Esophagus muscularis mucosa (tissue), 4 donors: ENCODE measurements at regions of chr5 and their contacts with region 1.

Region 1: DNA sequence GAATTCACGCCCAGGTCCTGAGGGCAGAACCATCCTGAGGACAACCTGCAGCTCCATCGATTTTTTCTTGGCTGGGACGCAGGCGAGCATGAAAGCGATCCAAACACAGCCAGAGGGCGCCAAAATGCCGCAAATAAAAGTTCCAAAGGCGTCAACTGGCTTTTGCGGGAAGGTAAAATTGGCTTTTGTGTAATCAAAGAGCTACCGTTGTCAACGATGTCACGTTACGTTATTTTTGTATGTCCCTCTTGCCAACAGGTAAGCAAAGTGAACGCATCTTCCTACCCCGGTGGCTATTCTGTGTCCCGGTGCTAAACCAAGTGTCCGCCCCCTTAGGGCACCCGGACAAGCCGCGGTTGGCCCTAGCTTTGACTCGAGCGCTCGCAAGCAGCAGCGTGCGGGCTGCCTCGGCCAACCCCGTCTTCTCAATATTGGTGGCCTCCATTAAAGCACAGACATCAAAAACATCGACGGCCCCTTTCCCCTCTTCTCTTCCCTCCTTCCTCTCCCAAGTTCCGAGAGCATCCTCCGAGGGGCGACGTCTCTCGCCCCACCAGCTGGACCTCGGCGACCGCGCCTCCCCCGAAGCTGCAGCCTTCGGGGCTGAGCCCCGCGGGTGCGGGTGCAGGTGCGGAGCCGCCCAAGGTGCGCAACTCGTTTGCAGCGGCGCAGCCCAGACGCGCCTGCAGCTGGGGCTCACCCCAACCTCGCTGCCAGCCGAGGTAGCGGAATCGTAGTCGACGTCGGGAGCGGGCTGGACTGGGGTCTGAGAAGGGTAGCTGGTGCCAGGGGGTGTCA is 1.1 kb upstream of the BASP1 start:
- DNase-seq: no peak
- H3K4me3 ChIP-seq: peak overlapping the region; percentile 48 to 61 (median 50)
- H3K27ac ChIP-seq: no peak overlapping the region
- H3K4me1 ChIP-seq: peaks cover 6 to 31% (median 30%) of the 10 kb centered on the region in 4 donors
- H3K27me3 ChIP-seq: peaks cover 0 to 71% (median 29%) of the 10 kb centered on the region in 4 donors
- CTCF ChIP-seq: peak; percentile 51 to 67 (median 65)
- EP300 ChIP-seq: no peak
- POLR2A ChIP-seq: no peak

Region 2: GRCh38 chr5:16936150-16936920 is 280.0 kb before region 1 on chr5 and contains the start of gene MYO10:
- intact Hi-C with region 1: no loop called
- DNase-seq: no peak
- H3K4me3 ChIP-seq: peak within 1 kb of the TSS; percentile 62 to 73 (median 68)
- H3K27ac ChIP-seq: peak within 1 kb of the TSS; percentile 45 to 71 (median 64)
- H3K4me1 ChIP-seq: peaks cover 9 to 30% (median 29%) of the 10 kb centered on the region in 4 donors
- H3K27me3 ChIP-seq: peaks cover 0 to 61% (median 20%) of the 10 kb centered on the region in 4 donors
- CTCF ChIP-seq: no peak
- EP300 ChIP-seq: no peak
- POLR2A ChIP-seq: no peak
- total RNA-seq, gene MYO10: 7.1 to 9.3 (median 7.8) TPM

Region 3: DNA sequence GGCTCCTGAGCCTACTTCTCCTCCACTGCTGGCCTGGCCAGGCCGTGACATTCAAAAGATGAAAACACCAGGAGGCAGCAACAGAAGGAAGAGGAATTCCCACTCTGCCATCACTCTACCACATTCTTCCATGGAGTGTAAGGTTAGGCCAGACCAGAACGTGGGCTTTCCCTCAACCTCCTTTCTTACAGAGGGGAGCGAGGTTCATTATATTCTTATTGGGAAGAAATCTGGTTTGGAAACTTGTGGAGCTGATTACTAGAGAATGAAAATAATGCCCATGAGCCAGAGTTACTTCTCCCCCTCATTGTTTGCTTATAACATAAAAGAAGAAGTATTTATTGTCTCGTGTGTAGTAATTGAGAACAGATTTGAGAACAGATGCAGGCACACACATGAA is 135.2 kb before region 1 on chr5:
- intact Hi-C with region 1: no loop called
- DNase-seq: no peak
- H3K4me3 ChIP-seq: no peak overlapping the region
- H3K27ac ChIP-seq: no peak overlapping the region
- H3K4me1 ChIP-seq: no peaks in the 10 kb centered on the region
- H3K27me3 ChIP-seq: no peaks in the 10 kb centered on the region
- CTCF ChIP-seq: no peak
- EP300 ChIP-seq: no peak
- POLR2A ChIP-seq: no peak

Region 4: DNA sequence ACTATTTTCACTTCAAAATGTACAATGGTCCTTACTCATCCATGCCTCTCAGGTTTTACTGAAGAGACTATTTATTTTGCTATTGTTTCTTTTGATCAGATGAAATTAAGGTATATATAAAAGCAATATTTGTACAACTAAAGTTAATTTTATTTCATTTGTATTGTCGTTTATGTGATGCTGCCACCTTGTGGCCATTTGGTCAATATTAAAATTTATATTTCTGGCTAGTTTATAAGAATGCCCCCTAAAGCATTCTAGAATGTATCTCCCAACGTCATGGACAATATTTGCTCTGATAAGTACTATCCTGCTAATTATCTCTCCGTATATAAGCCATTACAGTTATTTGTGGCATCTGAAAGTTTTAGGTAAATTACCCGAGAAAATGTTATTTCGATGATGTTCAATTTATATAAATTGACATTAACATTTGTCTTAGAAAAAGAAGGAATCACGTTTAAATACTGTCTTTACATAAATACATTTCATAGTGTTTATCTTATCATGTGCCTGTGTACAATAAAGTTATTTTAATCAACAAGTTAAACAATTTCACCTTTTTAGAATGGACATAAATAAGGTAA is 1097.9 kb after region 1 on chr5:
- intact Hi-C with region 1: loop called (anchors 5 kb)
- DNase-seq: no peak
- H3K4me3 ChIP-seq: no peak overlapping the region
- H3K27ac ChIP-seq: no peak overlapping the region
- H3K4me1 ChIP-seq: no peaks in the 10 kb centered on the region
- H3K27me3 ChIP-seq: no peaks in the 10 kb centered on the region
- CTCF ChIP-seq: peak; percentile 36 to 43 (median 42)
- EP300 ChIP-seq: no peak
- POLR2A ChIP-seq: no peak